Naive thymus-derived CD4-positive, alpha-beta T cell (primary cell): ENCODE measurements at regions of chr2 and their contacts with region 1.

Region 1: DNA sequence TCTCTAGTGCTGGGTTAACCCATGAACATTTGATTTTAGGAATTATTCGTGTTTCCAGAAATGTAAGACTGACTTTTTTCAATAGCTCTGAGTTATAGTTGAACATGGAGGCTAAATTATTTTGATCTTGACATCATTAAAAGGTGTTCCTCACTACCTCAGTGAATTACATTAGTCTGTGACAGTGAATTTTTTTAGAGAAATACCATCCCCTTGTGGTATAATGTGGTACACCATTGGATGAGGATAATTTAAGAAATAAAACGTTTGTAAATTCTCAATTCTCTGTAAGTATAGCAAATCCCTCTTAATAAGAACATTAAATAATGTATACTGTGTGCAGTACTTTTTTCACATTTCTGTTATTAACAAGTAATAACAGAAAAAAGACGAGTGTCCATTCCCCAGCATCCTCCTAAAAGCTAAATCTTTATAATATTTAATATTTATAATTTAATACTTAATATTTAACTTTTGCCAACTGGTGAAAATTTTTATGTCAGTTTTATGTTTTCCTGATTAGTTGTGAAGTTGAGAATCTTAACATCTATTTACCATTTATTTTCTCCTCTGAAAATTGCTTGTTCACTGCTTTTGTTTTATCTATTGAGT is 70.3 kb upstream of the CWC22 start:
- DNase-seq: no peak
- ATAC-seq: no peak
- H3K4me3 ChIP-seq: no peak overlapping the region
- H3K4me3 Mint-ChIP-seq: no peak overlapping the region
- H3K27ac ChIP-seq: no peak overlapping the region
- H3K27ac Mint-ChIP-seq: no peak overlapping the region
- H3K4me1 ChIP-seq: no peaks in the 10 kb centered on the region
- H3K4me1 Mint-ChIP-seq: no peaks in the 10 kb centered on the region
- H3K27me3 ChIP-seq: no peaks in the 10 kb centered on the region
- H3K27me3 Mint-ChIP-seq: peaks cover 0 to 18% (median 10%) of the 10 kb centered on the region in 5 donors

Region 2: DNA sequence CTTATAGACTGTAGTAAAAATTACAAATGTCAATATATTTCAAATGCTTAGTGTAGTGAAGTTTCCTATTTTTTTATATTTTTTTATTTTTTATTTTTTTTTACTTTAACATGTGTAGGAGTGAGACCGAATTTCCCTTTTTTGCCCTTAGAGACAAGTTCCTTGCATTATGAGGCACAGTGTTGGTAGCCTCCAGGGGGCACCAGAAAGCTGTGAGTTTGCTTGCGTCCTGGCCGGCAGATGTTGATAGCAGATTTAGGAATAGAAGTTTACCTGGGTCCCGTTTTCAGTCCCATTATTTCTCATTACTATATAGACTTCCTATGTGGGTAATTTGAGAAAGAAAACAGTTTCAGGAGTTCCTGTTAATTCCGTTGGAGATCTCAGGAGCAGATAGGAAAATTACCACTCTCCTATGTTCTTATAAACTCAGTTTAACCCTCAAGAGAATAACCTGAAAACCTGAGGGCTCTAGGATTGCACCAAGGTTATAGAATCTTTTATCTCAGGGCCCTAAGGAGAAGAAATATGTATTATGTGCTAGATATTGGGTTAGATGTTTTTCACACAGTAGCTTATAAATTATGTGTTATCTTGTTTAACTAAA is 655.3 kb before region 1 on chr2:
- CTCF ChIA-PET with region 1: no interaction called
- POLR2A ChIA-PET with region 1: no interaction called
- intact Hi-C with region 1: loop called in 1 of 2 experiments (anchors 5 kb)
- DNase-seq: peak in 3 of 9 donors; percentile 2 to 37 (median 3)
- ATAC-seq: peak; percentile 57
- H3K4me3 ChIP-seq: no peak overlapping the region
- H3K4me3 Mint-ChIP-seq: no peak overlapping the region
- H3K27ac ChIP-seq: no peak overlapping the region
- H3K27ac Mint-ChIP-seq: no peak overlapping the region
- H3K4me1 ChIP-seq: no peaks in the 10 kb centered on the region
- H3K4me1 Mint-ChIP-seq: peaks cover 0 to 2% (median 0%) of the 10 kb centered on the region in 7 donors
- H3K27me3 ChIP-seq: no peaks in the 10 kb centered on the region
- H3K27me3 Mint-ChIP-seq: peaks cover 8 to 36% (median 16%) of the 10 kb centered on the region in 5 donors

Region 3: DNA sequence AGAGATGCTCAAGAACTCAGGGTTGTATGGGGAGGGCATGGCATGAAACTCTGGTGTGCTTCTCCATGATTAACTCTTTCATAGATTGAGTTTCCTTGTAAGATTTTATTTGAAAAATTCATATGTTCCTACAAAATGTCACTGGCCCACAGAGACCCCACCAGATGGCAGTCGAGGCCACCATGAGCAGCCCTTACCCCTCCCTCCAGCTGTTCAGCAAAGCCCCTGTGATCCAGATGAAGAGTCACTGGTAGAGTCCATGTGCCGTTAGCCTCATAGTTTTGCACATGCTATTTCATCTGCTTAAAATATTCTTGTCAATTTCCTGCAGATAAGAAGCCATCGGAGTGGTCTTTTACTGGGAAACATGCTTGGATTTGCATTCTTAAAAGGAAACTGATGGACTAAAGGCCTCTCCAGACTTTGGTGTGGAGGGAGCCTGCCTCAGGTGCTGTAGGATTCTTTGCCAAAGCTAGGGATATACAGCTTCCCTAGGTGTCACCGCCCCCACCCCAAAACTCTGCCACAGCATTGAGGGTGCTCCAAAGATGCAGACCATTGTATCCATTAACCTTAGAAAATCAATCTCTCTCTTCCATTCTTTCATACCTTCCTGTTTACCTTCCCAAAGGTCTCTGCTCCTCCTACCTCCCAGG is 234.8 kb before region 1 on chr2:
- CTCF ChIA-PET with region 1: no interaction called
- POLR2A ChIA-PET with region 1: no interaction called
- intact Hi-C with region 1: no loop called
- DNase-seq: no peak
- ATAC-seq: no peak
- H3K4me3 ChIP-seq: no peak overlapping the region
- H3K4me3 Mint-ChIP-seq: no peak overlapping the region
- H3K27ac ChIP-seq: no peak overlapping the region
- H3K27ac Mint-ChIP-seq: no peak overlapping the region
- H3K4me1 ChIP-seq: no peaks in the 10 kb centered on the region
- H3K4me1 Mint-ChIP-seq: peaks cover 0 to 2% (median 0%) of the 10 kb centered on the region in 7 donors
- H3K27me3 ChIP-seq: no peaks in the 10 kb centered on the region
- H3K27me3 Mint-ChIP-seq: peaks cover 8 to 17% (median 10%) of the 10 kb centered on the region in 5 donors

Region 4: GRCh38 chr2:180000434-180000833 is 77.0 kb before region 1 on chr2:
- CTCF ChIA-PET with region 1: no interaction called
- POLR2A ChIA-PET with region 1: no interaction called
- intact Hi-C with region 1: no loop called
- DNase-seq: no peak
- ATAC-seq: no peak
- H3K4me3 ChIP-seq: no peak overlapping the region
- H3K4me3 Mint-ChIP-seq: peak overlapping the region in 1 of 10 donors; percentile 19
- H3K27ac ChIP-seq: no peak overlapping the region
- H3K27ac Mint-ChIP-seq: no peak overlapping the region
- H3K4me1 ChIP-seq: peaks cover under 1 to 1% of the 10 kb centered on the region in 2 donors
- H3K4me1 Mint-ChIP-seq: peaks cover 24 to 87% (median 85%) of the 10 kb centered on the region in 7 donors
- H3K27me3 ChIP-seq: no peaks in the 10 kb centered on the region
- H3K27me3 Mint-ChIP-seq: no peaks in the 10 kb centered on the region

Region 5: DNA sequence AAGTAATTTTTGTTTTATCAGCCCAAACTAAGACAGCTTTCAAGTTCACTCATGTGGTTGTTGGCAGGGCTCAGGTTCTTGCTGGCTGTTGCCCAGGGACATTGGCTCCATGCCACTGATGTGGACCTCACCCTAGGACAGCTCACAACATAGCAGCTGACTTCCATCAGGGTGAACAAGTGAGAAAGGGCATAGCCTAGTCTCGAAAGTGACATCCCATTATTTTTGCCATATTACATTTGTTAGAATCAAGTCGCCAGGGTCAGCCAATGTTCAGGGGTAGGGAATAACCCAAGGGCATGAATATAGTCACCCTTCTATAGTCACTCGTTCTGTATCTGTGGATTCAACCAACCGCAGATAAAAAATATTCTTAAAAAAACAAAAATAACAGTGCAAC is 59.6 kb before region 1 on chr2:
- CTCF ChIA-PET with region 1: no interaction called
- POLR2A ChIA-PET with region 1: no interaction called
- intact Hi-C with region 1: no loop called
- DNase-seq: no peak
- ATAC-seq: no peak
- H3K4me3 ChIP-seq: no peak overlapping the region
- H3K4me3 Mint-ChIP-seq: no peak overlapping the region
- H3K27ac ChIP-seq: no peak overlapping the region
- H3K27ac Mint-ChIP-seq: no peak overlapping the region
- H3K4me1 ChIP-seq: no peaks in the 10 kb centered on the region
- H3K4me1 Mint-ChIP-seq: peaks cover 0 to 2% (median 0%) of the 10 kb centered on the region in 7 donors
- H3K27me3 ChIP-seq: no peaks in the 10 kb centered on the region
- H3K27me3 Mint-ChIP-seq: peaks cover 2 to 25% (median 12%) of the 10 kb centered on the region in 5 donors